ENCODE measurements at regions of chr3 and their contacts with region 1.

Region 1: DNA sequence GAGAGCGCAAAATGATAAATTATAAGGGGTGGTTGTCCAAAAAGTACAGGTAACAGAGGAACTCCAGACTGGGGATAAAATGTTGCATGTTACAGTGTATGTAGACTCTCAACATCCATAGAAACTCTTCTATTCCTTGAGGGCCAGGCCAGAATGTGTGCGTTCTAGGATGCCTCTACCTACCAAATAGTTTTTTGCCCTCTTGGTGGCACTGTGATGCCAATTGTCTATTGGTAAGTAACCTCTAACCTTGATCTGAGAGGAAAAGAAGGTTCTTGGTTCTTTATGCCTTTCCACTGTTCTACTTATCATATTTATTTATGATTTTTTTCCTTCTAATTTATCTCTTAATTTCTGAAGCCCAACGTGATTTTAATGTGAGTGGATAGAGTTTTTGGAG is 424.6 kb downstream of the GRM7 start:
- DNase-seq: no peak
- ATAC-seq: no peak
- H3K4me3 ChIP-seq: no peak overlapping the region
- H3K27ac ChIP-seq: no peak overlapping the region
- H3K4me1 ChIP-seq: peaks cover 0 to 5% (median 0%) of the 10 kb centered on the region in 12 donors
- H3K27me3 ChIP-seq: no peaks in the 10 kb centered on the region
- CTCF ChIP-seq: peak in 9 of 12 donors; percentile 5 to 44 (median 29)
- POLR2A ChIP-seq: no peak

Region 2: GRCh38 chr3:7461202-7461825 is 175.8 kb after region 1 on chr3:
- intact Hi-C with region 1: no loop called
- DNase-seq: no peak
- ATAC-seq: no peak
- H3K4me3 ChIP-seq: no peak overlapping the region
- H3K27ac ChIP-seq: no peak overlapping the region
- H3K4me1 ChIP-seq: no peaks in the 10 kb centered on the region
- H3K27me3 ChIP-seq: no peaks in the 10 kb centered on the region
- CTCF ChIP-seq: no peak
- POLR2A ChIP-seq: no peak

Region 3: GRCh38 chr3:7546253-7546652 is 260.7 kb after region 1 on chr3:
- intact Hi-C with region 1: loop called in 8 of 10 experiments (anchors 2 to 10 kb)
- DNase-seq: no peak
- ATAC-seq: peak in 3 of 4 donors; percentile 46 to 59 (median 57)
- H3K4me3 ChIP-seq: no peak overlapping the region
- H3K27ac ChIP-seq: no peak overlapping the region
- H3K4me1 ChIP-seq: peaks cover 0 to 3% (median 0%) of the 10 kb centered on the region in 12 donors
- H3K27me3 ChIP-seq: no peaks in the 10 kb centered on the region
- CTCF ChIP-seq: peak in 11 of 12 donors; percentile 16 to 56 (median 32)
- POLR2A ChIP-seq: no peak